IMR-90 (cell line): ENCODE measurements at regions of chr1 and their contacts with region 1.

Region 1: DNA sequence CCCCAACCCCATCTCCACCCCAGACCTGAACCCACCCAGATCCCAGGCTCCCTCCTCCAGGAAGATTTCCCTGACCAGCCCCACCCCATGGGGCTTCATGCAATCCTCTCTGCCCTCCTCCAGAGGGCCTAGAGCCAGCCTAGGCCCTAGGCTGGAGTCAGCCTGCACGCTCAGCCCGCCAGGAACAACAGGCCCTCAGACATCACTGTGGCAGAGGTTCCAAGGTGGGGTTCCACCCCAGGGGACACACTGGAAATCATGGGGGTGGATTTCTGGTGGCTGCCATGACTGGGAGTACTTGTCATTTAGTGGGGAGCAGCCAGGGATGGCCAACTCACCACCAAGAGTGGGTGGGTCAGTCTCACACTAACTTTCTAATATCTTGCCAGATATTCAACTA is 122.0 kb downstream of the GLIS1 start:
- DNase-seq: peak; percentile 26
- ATAC-seq: peak; percentile 36
- H3K4me3 ChIP-seq: no peak overlapping the region
- H3K27ac ChIP-seq: no peak overlapping the region
- H3K4me1 ChIP-seq: peaks cover 11% of the 10 kb centered on the region
- H3K27me3 ChIP-seq: no peaks in the 10 kb centered on the region
- CTCF ChIP-seq: no peak
- POLR2A ChIP-seq: no peak
- RAD21 ChIP-seq: no peak

Region 2: GRCh38 chr1:53739109-53739681 is 122.3 kb after region 1 on chr1 and contains the start of gene GLIS1:
- CTCF ChIA-PET with region 1: no interaction called
- POLR2A ChIA-PET with region 1: no interaction called
- dilution Hi-C with region 1: no loop called
- in situ Hi-C with region 1: no loop called
- intact Hi-C with region 1: loop called (anchors 1 kb)
- DNase-seq: peak; percentile 82
- ATAC-seq: peak; percentile 96
- H3K4me3 ChIP-seq: peak within 1 kb of the TSS; percentile 66
- H3K27ac ChIP-seq: peak within 1 kb of the TSS; percentile 22
- H3K4me1 ChIP-seq: peaks cover 31% of the 10 kb centered on the region
- H3K27me3 ChIP-seq: no peaks in the 10 kb centered on the region
- CTCF ChIP-seq: no peak
- POLR2A ChIP-seq: peak; percentile 58
- RAD21 ChIP-seq: no peak
- total RNA-seq, gene GLIS1: 0.18 and 0.28 TPM in 2 replicates

Region 3: DNA sequence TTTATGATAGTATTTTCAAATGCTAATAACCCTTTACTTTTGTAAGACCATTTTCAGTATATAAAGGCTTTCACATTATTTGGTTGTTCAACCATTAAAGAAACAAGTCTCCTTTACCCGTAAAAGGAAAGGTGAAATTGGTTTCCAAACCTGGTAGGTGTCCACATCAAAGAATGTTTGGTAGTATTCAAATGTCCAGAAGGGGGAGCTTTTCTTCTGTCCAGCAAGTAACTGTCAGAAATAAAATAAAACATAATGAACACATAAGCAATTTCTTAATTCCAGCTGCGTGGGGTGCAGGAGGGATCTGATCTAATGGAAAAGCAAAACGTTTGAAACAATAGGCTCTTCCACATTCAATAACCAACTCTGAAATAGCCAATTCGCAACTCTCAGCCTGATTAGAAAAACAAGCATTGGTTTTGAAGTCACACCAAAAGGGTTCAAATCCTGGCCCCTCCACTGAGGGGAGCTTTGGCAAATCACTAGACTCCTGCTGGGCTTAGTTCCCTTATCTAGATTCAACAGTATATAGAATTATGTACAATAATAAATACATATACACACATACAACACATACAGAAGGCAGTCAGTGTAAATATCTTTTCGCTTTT is 261.7 kb after region 1 on chr1:
- CTCF ChIA-PET with region 1: no interaction called
- POLR2A ChIA-PET with region 1: no interaction called
- dilution Hi-C with region 1: no loop called
- in situ Hi-C with region 1: no loop called
- intact Hi-C with region 1: no loop called
- DNase-seq: peak; percentile 69
- ATAC-seq: peak; percentile 65
- H3K4me3 ChIP-seq: no peak overlapping the region
- H3K27ac ChIP-seq: no peak overlapping the region
- H3K4me1 ChIP-seq: no peaks in the 10 kb centered on the region
- H3K27me3 ChIP-seq: no peaks in the 10 kb centered on the region
- CTCF ChIP-seq: peak; percentile 67
- POLR2A ChIP-seq: no peak
- RAD21 ChIP-seq: peak; percentile 72